PC-9 (cell line): ENCODE measurements at regions of chr9 and their contacts with region 1.

Region 1: DNA sequence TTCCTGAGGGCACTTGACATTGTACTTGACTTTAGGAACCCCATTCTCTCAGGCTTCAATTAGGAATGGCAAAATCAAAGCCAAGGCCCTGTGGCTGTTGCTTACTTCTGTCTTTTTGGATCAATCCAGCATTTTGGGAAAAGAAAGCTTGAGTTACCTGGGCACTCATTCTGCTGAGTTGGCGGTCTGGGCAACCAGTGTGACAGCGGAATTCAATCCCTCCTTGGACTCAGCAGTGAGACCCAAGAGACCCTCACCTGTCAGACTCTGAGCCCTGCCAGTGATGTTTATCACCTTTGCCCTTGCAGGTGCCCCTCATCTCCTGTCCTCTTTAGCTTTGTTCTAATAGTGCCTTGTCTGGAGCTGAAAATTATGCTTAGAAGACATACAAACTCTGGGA is 225.3 kb downstream of the PAPPA start:
- DNase-seq: no peak
- H3K4me3 ChIP-seq: no peak overlapping the region
- H3K27ac ChIP-seq: no peak overlapping the region
- H3K4me1 ChIP-seq: peaks cover 17% of the 10 kb centered on the region
- H3K27me3 ChIP-seq: no peaks in the 10 kb centered on the region
- CTCF ChIP-seq: no peak

Region 2: DNA sequence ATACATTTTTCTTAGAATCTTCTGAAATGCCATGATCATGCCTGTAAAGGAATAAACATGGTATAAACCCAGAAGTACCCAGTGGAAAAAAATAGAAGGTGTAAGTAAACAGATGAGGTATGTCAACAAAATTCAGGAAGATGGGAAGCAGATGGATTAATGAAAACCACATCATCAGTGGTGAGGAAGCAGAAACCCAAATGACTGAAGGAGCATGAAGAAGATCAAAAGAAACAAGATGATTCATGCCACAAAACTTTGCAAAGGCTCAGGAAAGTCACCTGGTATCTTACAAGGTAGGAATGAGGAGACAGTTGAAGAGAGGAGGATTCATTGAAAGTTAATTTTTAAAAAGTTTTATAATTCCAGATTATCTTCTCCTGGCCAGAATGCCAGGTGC is 358.1 kb before region 1 on chr9:
- CTCF ChIA-PET with region 1: no interaction called
- POLR2A ChIA-PET with region 1: no interaction called
- intact Hi-C with region 1: no loop called
- DNase-seq: peak in 1 of 2 experiments; percentile 59
- H3K4me3 ChIP-seq: no peak overlapping the region
- H3K27ac ChIP-seq: 0 out of 2 replicates have a peak overlapping the region, but pooled peaks have one; percentile 6
- H3K4me1 ChIP-seq: peaks cover 10% of the 10 kb centered on the region
- H3K27me3 ChIP-seq: no peaks in the 10 kb centered on the region
- CTCF ChIP-seq: no peak

Region 3: DNA sequence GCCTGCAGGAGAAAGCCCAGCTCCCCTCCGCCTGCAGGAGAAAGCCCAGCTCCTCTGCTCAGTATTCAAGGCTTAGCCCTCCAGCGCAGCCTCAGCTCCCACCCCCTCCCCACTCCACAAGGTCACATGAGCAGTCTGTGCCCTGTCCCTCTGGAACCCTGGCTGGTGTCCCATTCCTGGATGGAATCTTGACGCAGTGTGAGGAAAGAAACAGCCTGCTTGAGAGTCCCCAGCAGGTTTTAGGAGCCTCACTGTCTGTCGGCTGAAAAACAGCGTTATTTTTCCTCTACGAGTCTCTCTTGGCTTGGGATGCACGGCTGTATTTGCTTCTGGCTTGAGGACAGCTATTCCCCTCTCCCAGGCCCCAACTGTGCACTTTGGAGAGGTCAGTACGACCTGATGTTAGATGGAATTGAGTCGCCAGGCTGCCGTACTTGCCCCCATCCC is 98.1 kb after region 1 on chr9:
- CTCF ChIA-PET with region 1: no interaction called
- POLR2A ChIA-PET with region 1: interaction called, 36 read pairs
- intact Hi-C with region 1: no loop called
- DNase-seq: no peak
- H3K4me3 ChIP-seq: no peak overlapping the region
- H3K27ac ChIP-seq: no peak overlapping the region
- H3K4me1 ChIP-seq: no peaks in the 10 kb centered on the region
- H3K27me3 ChIP-seq: no peaks in the 10 kb centered on the region
- CTCF ChIP-seq: no peak